A549 (cell line): ENCODE measurements at regions of chr18 and their contacts with region 1.

Region 1: DNA sequence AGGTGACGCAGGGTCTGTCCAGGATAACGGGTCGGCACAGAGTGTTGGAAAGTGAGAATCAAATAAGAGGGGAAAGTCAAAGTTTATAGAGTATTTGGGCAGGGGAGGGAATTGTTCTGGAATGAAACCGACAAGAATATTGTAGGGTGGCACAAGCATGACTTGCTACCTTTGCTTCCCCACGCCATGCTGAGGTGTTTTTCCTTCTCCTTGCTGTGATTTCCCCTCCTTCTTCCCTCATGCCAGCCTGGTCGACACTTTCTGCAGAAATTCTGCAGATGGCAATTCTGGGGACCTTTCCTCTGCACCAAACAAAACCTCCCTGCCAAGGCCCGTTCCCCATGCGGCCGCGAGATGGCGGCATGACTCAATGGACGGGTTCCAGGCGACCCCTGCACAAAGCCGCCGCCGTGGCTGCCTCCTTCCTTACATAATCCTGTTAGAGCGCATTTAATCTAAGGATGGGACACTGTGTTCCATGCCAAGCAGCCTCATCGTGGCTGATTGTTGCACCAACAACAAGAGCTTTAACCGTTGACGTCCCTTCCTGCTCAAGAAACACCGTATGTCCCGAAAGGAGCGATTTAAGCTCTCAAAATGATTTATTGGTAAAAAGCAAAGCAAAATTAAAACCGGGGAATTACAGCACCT is at the start of gene MRO:
- DNase-seq: peak; percentile 59 to 75
- ATAC-seq: peak; percentile 97 to 99
- H3K4me3 ChIP-seq: peak within 1 kb of the TSS; percentile 47
- H3K27ac ChIP-seq: peak within 1 kb of the TSS; percentile 70 to 77
- H3K4me1 ChIP-seq: peaks cover 10% of the 10 kb centered on the region; the same call in 2 of the 3 replicates
- CTCF ChIP-seq: peak; percentile 79
- EP300 ChIP-seq: no peak
- POLR2A ChIP-seq: no peak
- RAD21 ChIP-seq: peak; percentile 95 to 97
- polyA plus RNA-seq, gene MRO: 0.28 and 0.39 TPM in 2 replicates

Region 2: GRCh38 chr18:50806208-50806616 is 13.6 kb before region 1 on chr18:
- CTCF ChIA-PET with region 1: no interaction called
- POLR2A ChIA-PET with region 1: no interaction called
- DNase-seq: no peak
- ATAC-seq: no peak
- H3K4me3 ChIP-seq: no peak overlapping the region
- H3K27ac ChIP-seq: no peak overlapping the region
- H3K4me1 ChIP-seq: no peaks in the 10 kb centered on the region
- CTCF ChIP-seq: no peak
- EP300 ChIP-seq: no peak
- POLR2A ChIP-seq: no peak
- RAD21 ChIP-seq: no peak

Region 3: DNA sequence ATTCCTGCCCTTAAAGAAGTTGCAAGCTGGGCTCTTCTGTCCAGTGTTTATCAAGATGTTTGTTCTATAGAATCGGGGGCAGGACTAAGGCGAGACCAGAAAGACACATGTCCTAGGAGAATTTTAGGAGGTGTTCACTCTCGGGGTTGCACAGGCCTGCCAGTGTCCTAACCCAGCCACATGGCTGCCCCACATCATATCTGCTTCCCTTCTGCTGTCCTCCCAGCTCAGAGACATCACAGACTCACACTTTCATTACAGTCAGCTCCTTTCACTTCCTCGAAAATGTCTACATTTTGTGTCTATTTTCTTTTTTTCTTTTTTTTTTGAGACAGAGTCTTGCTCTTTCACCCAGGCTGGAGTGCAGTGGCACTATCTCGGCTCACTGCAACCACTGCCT is 10.7 kb after region 1 on chr18:
- CTCF ChIA-PET with region 1: interaction called, 24 read pairs
- POLR2A ChIA-PET with region 1: no interaction called
- DNase-seq: no peak
- ATAC-seq: no peak
- H3K4me3 ChIP-seq: no peak overlapping the region
- H3K27ac ChIP-seq: no peak overlapping the region
- H3K4me1 ChIP-seq: peaks cover 4% of the 10 kb centered on the region; the same call in 1 of the 3 replicates
- CTCF ChIP-seq: no peak
- EP300 ChIP-seq: no peak
- POLR2A ChIP-seq: no peak
- RAD21 ChIP-seq: no peak

Region 4: GRCh38 chr18:50857694-50858093 is 37.8 kb after region 1 on chr18:
- CTCF ChIA-PET with region 1: interaction called, 30 read pairs
- POLR2A ChIA-PET with region 1: no interaction called
- DNase-seq: peak in 1 of 2 experiments; percentile 32
- ATAC-seq: peak; percentile 57 to 64; a peak in 5 of 6 replicates
- H3K4me3 ChIP-seq: no peak overlapping the region
- H3K27ac ChIP-seq: peak overlapping the region; percentile 71 to 92
- H3K4me1 ChIP-seq: peaks cover 33% of the 10 kb centered on the region
- CTCF ChIP-seq: no peak
- EP300 ChIP-seq: no peak
- POLR2A ChIP-seq: no peak
- RAD21 ChIP-seq: peak in 1 of 2 experiments; percentile 42; a peak in 2 of 5 replicates

Region 5: DNA sequence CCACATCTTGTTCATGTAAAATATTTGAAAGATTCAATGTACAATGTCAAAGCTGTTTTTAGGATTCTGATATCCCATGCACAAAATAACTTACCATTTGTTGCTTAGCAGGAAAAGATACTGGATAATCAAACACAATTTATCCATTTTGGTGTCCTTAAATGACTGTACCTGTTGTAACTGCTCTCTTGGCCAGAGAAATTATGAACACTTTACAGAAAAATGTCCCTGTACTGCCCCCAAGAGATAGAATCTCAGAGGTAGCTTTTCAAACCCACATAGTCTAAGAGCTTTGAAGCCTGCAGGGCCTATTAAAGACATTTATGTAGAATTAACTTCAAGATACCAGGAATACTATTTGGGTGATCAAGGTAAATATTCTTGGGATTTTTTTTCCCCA is 46.9 kb after region 1 on chr18:
- CTCF ChIA-PET with region 1: interaction called, 30 read pairs
- POLR2A ChIA-PET with region 1: interaction called, 3 read pairs
- DNase-seq: no peak
- ATAC-seq: peak; percentile 52 to 79; a peak in 3 of 6 replicates
- H3K4me3 ChIP-seq: no peak overlapping the region
- H3K27ac ChIP-seq: no peak overlapping the region; a peak in 1 of 6 replicates
- H3K4me1 ChIP-seq: peaks cover 32% of the 10 kb centered on the region
- CTCF ChIP-seq: peak; percentile 35; the same call in 2 of the 3 replicates
- EP300 ChIP-seq: no peak
- POLR2A ChIP-seq: no peak
- RAD21 ChIP-seq: peak; percentile 58 to 60